Activated CD8-positive, alpha-beta T cell treated with anti-CD3 and anti-CD28 coated beads, Interleukin-2, amount 10 ng/mL, durations not matched to agents 7 days and 5 days (primary cell): ENCODE measurements at regions of chr22 and their contacts with region 1.

Region 1: GRCh38 chr22:29603358-29604075 is at the start of gene NF2:
- DNase-seq: peak; percentile 99
- ATAC-seq: peak; percentile 98
- H3K4me3 Mint-ChIP-seq: peak within 1 kb of the TSS; percentile 95
- H3K27ac Mint-ChIP-seq: peak within 1 kb of the TSS; percentile 94
- H3K4me1 Mint-ChIP-seq: peaks cover 25% of the 10 kb centered on the region
- H3K27me3 Mint-ChIP-seq: no peaks in the 10 kb centered on the region
- total RNA-seq, gene NF2: 60.6 to 61.2 TPM

Region 2: DNA sequence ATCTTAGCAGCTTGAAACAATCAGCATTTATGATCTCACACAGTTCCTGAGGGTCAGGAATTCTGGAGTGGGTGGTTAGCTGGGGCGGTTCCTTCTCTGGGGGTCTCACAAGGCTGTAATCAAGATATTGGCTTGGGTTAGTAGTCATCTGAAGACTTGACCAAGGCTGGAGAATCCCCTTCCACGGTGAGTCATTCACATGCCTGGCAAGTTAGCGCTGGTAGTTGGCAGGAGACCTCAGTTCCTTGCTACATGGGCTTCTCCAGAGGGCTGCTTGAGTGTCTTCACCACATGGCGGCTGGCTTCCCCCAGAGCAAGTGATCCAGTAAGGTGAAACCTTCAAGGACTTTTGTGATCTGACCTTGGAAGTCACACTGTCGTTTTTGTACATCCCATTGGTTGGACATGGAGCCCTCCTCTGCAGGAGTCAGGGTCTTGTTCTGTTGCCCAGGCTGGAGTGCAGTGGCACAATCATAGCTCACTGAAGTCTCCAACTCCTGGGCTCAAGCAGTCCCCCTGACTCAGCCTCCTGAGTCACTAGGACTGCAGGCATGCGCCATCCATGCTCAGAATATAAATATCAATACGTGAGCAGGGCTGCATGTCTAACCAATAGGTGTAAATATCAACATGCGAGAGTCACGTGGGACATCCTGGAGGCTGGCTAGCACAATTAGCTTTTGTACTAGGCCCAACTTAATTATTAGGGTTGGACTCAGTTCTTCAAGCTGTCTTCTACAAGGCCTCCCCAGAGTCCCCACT is 15.4 kb before region 1 on chr22:
- CTCF ChIA-PET with region 1: interaction called, 12 read pairs
- POLR2A ChIA-PET with region 1: interaction called, 5 read pairs
- DNase-seq: no peak
- ATAC-seq: no peak
- H3K4me3 Mint-ChIP-seq: no peak overlapping the region
- H3K27ac Mint-ChIP-seq: no peak overlapping the region
- H3K4me1 Mint-ChIP-seq: peaks cover 12% of the 10 kb centered on the region
- H3K27me3 Mint-ChIP-seq: no peaks in the 10 kb centered on the region

Region 3: DNA sequence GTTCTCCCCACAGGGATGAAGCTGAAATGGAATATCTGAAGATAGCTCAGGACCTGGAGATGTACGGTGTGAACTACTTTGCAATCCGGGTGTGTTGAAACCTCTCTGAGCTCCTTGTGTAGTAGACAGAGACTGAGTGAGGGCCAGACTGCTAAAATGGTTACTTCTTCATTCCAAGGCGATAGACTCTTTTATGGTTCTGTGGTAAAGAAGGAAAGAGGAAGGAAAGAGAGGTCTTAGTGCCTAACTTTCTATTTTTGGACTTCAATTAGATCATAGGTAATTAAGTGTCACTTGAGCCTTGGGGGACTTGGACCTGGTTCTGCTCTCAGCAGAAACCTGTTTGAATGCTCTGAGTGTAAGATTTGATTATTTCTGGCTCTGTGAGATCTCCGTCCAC is 54.7 kb after region 1 on chr22:
- CTCF ChIA-PET with region 1: no interaction called
- POLR2A ChIA-PET with region 1: no interaction called
- DNase-seq: no peak
- ATAC-seq: no peak
- H3K4me3 Mint-ChIP-seq: no peak overlapping the region
- H3K27ac Mint-ChIP-seq: no peak overlapping the region
- H3K4me1 Mint-ChIP-seq: peaks cover 4% of the 10 kb centered on the region
- H3K27me3 Mint-ChIP-seq: no peaks in the 10 kb centered on the region

Region 4: GRCh38 chr22:29689880-29690213 is 86.3 kb after region 1 on chr22:
- CTCF ChIA-PET with region 1: no interaction called
- POLR2A ChIA-PET with region 1: no interaction called
- DNase-seq: peak; percentile 53
- ATAC-seq: no peak
- H3K4me3 Mint-ChIP-seq: no peak overlapping the region
- H3K27ac Mint-ChIP-seq: no peak overlapping the region
- H3K4me1 Mint-ChIP-seq: no peaks in the 10 kb centered on the region
- H3K27me3 Mint-ChIP-seq: no peaks in the 10 kb centered on the region

Region 5: DNA sequence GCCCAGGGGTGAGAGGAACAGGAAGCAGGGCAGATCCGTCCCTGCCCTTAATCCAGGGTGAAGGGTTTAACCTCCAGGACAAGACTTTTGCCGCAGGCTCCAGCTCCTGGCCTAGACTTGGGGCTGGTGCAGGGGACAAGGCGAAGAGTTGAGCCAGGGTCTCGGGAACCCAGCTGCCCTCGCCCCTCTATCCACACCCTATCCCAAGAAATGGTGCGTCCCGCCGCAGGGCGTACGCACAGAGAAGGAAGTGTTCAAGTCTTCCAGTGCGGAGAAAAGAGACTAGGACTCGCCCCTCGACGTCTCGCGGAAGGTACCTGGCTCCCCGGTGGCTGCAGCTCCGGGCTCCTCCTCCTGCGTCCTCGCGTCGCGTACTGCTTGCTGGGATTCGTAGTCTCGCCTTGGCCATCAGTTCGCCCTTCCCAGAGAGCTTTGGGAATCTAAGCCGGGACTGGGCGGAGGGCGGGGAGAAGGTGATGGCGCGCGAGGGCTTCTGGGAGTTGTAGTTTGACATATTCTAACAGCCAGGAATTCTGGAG is 163.2 kb after region 1 on chr22 and contains the start of gene ZMAT5:
- CTCF ChIA-PET with region 1: no interaction called
- POLR2A ChIA-PET with region 1: no interaction called
- DNase-seq: peak; percentile 97
- ATAC-seq: peak; percentile 96
- H3K4me3 Mint-ChIP-seq: peak within 1 kb of the TSS; percentile 93
- H3K27ac Mint-ChIP-seq: peak within 1 kb of the TSS; percentile 92
- H3K4me1 Mint-ChIP-seq: peaks cover 42% of the 10 kb centered on the region
- H3K27me3 Mint-ChIP-seq: no peaks in the 10 kb centered on the region
- total RNA-seq, gene ZMAT5: 19.0 to 21.8 TPM